ENCODE measurements at regions of chr19 and their contacts with region 1.

Region 1: DNA sequence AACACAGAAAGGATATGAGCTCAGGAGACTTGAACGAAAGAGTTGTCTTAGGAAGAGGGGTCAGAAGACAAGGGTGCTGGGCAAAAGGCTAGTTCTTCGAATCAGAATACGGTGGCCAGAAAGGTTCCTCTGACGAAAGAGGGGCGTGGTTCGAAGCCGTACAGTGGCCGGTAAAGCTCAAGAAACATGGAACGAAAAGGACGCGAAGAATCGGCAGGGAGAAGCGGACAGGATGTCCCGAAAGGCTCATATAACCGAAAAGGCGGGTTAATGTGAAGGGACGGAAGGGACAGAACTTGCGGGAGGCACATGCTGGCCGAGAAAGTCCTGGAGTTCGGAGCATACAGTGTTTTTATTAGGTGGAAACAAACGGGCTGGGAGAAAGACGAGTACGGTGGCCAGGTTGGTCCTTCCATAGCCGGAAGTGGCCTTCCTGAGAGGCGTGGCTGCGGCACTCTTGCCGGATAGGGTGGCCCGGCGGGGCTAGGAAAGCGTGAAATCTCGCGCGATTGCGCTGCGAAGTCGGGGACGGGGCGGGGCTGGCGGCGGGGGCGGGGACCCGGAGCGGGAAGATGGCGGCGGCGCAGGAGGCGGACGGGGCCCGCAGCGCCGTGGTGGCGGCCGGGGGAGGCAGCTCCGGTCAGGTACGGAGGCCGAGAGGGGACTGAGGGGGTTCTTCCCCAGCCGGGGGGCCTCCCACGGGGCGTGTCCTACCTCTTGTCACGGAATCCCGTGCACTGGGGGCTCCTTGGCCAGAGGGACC is at the start of gene CLPTM1:
- DNase-seq: peak; percentile 99
- ATAC-seq: peak; percentile 96
- H3K4me3 ChIP-seq: peak within 1 kb of the TSS; percentile 95
- H3K27ac ChIP-seq: peak within 1 kb of the TSS; percentile 89
- H3K4me1 ChIP-seq: peaks cover 25% of the 10 kb centered on the region
- H3K27me3 ChIP-seq: no peaks in the 10 kb centered on the region
- CTCF ChIP-seq: no peak
- total RNA-seq, gene CLPTM1: 103 TPM

Region 2: DNA sequence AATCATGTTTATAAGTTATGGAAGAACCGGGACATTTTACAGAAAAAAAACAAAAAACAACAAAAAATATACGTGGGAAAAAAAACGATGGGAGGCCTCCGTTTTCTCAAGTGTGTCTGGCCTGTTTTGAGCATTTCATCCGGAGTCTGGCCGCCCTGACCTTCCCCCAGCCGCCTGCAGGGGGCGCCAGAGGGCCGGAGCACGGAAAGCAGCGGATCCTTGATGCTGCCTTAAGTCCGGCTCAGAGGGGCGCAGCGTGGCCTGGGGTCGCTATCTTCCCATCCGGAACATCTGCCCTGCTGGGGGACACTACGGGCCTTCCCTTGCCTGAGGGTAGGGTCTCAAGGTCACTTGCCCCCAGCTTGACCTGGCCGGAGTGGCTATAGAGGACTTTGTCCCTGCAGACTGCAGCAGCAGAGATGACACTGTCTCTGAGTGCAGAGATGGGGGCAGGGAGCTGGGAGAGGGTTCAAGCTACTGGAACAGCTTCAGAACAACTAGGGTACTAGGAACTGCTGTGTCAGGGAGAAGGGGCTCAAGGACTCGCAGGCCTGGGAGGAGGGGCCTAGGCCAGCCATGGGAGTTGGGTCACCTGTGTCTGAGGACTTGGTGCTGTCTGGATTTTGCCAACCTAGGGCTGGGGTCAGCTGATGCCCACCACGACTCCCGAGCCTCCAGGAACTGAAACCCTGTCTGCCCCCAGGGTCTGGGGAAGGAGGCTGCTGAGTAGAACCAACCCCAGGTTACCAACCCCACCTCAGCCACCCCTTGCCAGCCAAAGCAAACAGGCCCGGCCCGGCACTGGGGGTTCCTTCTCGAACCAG is 51.2 kb before region 1 on chr19:
- intact Hi-C with region 1: loop called (anchors 10 kb)
- DNase-seq: peak; percentile 85
- ATAC-seq: peak; percentile 81
- H3K4me3 ChIP-seq: no peak overlapping the region
- H3K27ac ChIP-seq: no peak overlapping the region
- H3K4me1 ChIP-seq: no peaks in the 10 kb centered on the region
- H3K27me3 ChIP-seq: peaks cover 5% of the 10 kb centered on the region
- CTCF ChIP-seq: peak; percentile 99

Region 3: GRCh38 chr19:45091031-45091923 is 136.3 kb after region 1 on chr19:
- intact Hi-C with region 1: no loop called
- DNase-seq: peak; percentile 98
- ATAC-seq: peak; percentile 95
- H3K4me3 ChIP-seq: peak overlapping the region; percentile 92
- H3K27ac ChIP-seq: peak overlapping the region; percentile 94
- H3K4me1 ChIP-seq: peaks cover 29% of the 10 kb centered on the region
- H3K27me3 ChIP-seq: no peaks in the 10 kb centered on the region
- CTCF ChIP-seq: no peak

Region 4: GRCh38 chr19:45117669-45118068 is 162.7 kb after region 1 on chr19:
- intact Hi-C with region 1: no loop called
- DNase-seq: no peak
- ATAC-seq: no peak
- H3K4me3 ChIP-seq: no peak overlapping the region
- H3K27ac ChIP-seq: no peak overlapping the region
- H3K4me1 ChIP-seq: peaks cover 12% of the 10 kb centered on the region
- H3K27me3 ChIP-seq: no peaks in the 10 kb centered on the region
- CTCF ChIP-seq: no peak